H1 (cell line): ENCODE measurements at regions of chr1 and their contacts with region 1.

Region 1: GRCh38 chr1:44631647-44632539 is 42.4 kb downstream of the TMEM53 start:
- DNase-seq: peak in 1 of 2 experiments; percentile 91
- H3K4me3 ChIP-seq: peak overlapping the region; percentile 73 to 81 (median 78)
- H3K27ac ChIP-seq: peak overlapping the region; percentile 96
- H3K4me1 ChIP-seq: peaks cover 0 to 11% (median 4%) of the 10 kb centered on the region in 4 experiments; a peak in 6 of 7 replicates
- H3K27me3 ChIP-seq: no peaks in the 10 kb centered on the region
- CTCF ChIP-seq: no peak
- EP300 ChIP-seq: peak in 1 of 2 experiments; percentile 36; a peak in 1 of 3 replicates
- POLR2A ChIP-seq: peak; percentile 61 to 97
- RAD21 ChIP-seq: no peak

Region 2: DNA sequence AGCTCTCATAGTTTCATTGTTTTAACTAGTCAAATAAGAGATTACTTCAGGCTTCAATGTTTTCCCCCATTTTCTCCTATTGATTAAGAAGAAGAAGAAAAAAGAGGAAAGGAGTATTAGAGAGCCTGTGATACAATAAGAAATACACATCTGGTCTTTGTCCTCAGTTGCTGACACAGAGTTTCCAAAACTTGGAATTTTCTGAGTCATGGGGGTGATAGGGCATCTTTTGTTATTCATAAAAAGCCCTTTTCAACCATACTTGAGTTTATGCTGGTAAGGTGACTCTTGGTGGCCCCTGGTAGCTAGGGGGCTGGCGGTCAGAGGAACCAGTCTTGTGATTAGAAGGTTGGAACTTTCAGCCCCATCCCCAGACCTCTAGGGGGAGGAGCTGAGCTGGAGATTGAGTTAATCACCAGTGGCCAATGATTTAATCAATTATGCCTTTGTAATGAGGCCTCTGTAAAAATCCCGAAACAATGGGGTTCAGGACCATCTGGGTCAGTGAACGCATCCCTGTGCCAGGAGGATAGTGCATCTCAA is 461.5 kb before region 1 on chr1:
- CTCF ChIA-PET with region 1: no interaction called
- POLR2A ChIA-PET with region 1: no interaction called
- DNase-seq: no peak
- H3K4me3 ChIP-seq: no peak overlapping the region
- H3K27ac ChIP-seq: no peak overlapping the region
- H3K4me1 ChIP-seq: no peaks in the 10 kb centered on the region; a peak in 1 of 7 replicates
- H3K27me3 ChIP-seq: no peaks in the 10 kb centered on the region
- CTCF ChIP-seq: peak in 2 of 3 experiments; percentile 13 to 26; a peak in 2 of 4 replicates
- EP300 ChIP-seq: no peak
- POLR2A ChIP-seq: no peak
- RAD21 ChIP-seq: peak; percentile 14 to 40; a peak in 3 of 4 replicates

Region 3: DNA sequence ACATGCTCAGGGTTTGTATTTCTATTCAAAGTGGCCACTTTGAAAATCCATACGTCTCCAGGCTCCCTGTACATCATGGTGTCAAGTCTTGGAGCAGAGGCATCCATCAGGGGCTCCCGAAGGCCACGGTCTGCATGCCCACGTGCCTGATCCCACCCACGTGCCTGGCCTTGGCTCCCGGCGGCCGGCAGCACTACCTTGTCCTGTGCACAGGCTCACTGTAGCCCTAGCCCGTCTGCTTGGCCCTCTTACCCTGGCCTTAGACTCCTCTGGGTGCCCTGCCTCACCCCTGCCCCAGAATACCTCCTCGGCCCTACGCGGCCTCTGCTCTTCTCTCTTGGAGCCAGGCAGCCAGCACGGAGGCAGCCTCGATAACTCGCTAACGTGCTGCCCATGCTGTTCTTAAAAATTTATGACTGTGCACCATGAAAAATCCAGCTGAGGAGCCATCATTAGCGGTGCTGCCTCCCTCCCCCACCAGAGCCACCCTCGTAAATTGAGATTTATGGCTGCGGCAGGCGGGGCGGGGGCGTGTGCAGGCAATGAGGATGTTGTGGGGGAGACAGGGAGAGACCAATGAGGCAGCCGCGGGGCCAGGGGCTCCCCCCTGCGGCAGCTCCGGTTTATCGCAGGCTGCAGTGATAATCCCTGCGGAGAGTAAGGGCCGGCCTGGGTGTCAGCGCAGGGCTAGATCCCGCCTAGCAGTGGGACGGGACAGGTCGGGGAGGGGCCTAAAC is 394.0 kb before region 1 on chr1:
- CTCF ChIA-PET with region 1: no interaction called
- POLR2A ChIA-PET with region 1: interaction called, 11 read pairs
- DNase-seq: peak; percentile 69 to 91
- H3K4me3 ChIP-seq: peak overlapping the region in 1 of 4 experiments; percentile 31; a peak in 2 of 8 replicates
- H3K27ac ChIP-seq: no peak overlapping the region
- H3K4me1 ChIP-seq: peaks cover 0 to 26% (median 15%) of the 10 kb centered on the region in 4 experiments; a peak in 6 of 7 replicates
- H3K27me3 ChIP-seq: no peaks in the 10 kb centered on the region
- CTCF ChIP-seq: peak; percentile 70 to 86 (median 81)
- EP300 ChIP-seq: no peak
- POLR2A ChIP-seq: no peak
- RAD21 ChIP-seq: peak; percentile 58 to 60

Region 4: DNA sequence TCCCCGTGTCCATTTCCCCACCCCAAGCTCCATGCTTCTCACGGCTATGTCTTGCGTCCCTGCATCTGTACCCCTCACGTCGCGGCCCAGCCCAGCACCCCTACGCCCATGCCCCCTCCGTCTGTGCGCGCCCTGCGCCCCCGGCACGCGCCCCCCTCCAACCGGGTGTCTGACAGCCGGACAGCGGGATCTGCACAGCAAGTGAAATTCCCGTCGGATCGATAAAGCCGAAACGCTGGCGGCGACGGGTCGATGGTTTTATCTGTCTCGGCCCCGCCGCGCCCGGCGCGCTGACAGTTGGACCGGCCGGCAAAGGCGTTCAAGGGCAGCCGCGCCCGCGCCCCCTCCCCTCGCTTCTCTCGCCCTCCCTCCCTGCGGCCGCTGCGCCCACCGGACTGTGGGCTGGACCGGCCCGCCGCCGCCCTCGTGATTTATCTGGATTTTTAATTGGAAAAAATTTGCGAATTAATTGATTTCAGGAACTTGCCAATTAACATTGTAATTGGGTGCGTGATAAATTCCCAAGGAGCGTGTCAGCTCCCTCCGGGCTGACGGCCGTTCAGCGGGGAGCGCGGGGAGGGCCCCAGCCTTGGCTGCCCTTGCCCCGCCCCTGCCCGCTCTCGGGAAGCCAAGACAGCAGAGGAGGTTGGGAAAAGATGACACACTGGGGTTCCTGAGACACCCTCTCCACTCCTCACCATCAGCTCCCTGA is 14.7 kb before region 1 on chr1:
- CTCF ChIA-PET with region 1: interaction called, 127 read pairs
- POLR2A ChIA-PET with region 1: interaction called, 633 read pairs
- DNase-seq: peak in 1 of 2 experiments; percentile 69
- H3K4me3 ChIP-seq: peak overlapping the region; percentile 34 to 67 (median 53)
- H3K27ac ChIP-seq: no peak overlapping the region
- H3K4me1 ChIP-seq: peaks cover 0 to 7% (median 6%) of the 10 kb centered on the region in 4 experiments; a peak in 6 of 7 replicates
- H3K27me3 ChIP-seq: peaks cover 0 to 4% (median 2%) of the 10 kb centered on the region in 4 experiments; a peak in 3 of 7 replicates
- CTCF ChIP-seq: no peak
- EP300 ChIP-seq: no peak
- POLR2A ChIP-seq: no peak
- RAD21 ChIP-seq: no peak

Region 5: GRCh38 chr1:44645476-44646244 is 13.8 kb after region 1 on chr1:
- CTCF ChIA-PET with region 1: interaction called, 197 read pairs
- POLR2A ChIA-PET with region 1: interaction called, 633 read pairs
- DNase-seq: no peak
- H3K4me3 ChIP-seq: no peak overlapping the region
- H3K27ac ChIP-seq: no peak overlapping the region
- H3K4me1 ChIP-seq: peaks cover 0 to 10% (median 8%) of the 10 kb centered on the region in 4 experiments; a peak in 4 of 7 replicates
- H3K27me3 ChIP-seq: no peaks in the 10 kb centered on the region
- CTCF ChIP-seq: no peak
- EP300 ChIP-seq: no peak
- POLR2A ChIP-seq: no peak
- RAD21 ChIP-seq: no peak

Region 6: GRCh38 chr1:44674113-44675000 is 42.5 kb after region 1 on chr1 and contains the starts of genes ARMH1 and TMEM53:
- CTCF ChIA-PET with region 1: interaction called, 3 read pairs
- POLR2A ChIA-PET with region 1: interaction called, 23 read pairs
- DNase-seq: peak; percentile 97 to 98
- H3K4me3 ChIP-seq: peak within 1 kb of the TSS; percentile 58 to 93 (median 75)
- H3K27ac ChIP-seq: peak within 1 kb of the TSS; percentile 80
- H3K4me1 ChIP-seq: peaks cover 4 to 11% (median 6%) of the 10 kb centered on the region in 4 experiments; a peak in 6 of 7 replicates
- H3K27me3 ChIP-seq: no peaks in the 10 kb centered on the region; a peak in 1 of 7 replicates
- CTCF ChIP-seq: no peak
- EP300 ChIP-seq: no peak
- POLR2A ChIP-seq: peak; percentile 82 to 89
- RAD21 ChIP-seq: no peak
- total RNA-seq, gene ARMH1: 0.63 and 0.82 TPM in 2 replicates
- total RNA-seq, gene TMEM53: 6.7 and 9.5 TPM in 2 replicates